WTC11 (cell line): ENCODE measurements at regions of chr1 and their contacts with region 1.

Region 1: GRCh38 chr1:32753532-32754312 is 51.2 kb upstream of the SYNC start:
- DNase-seq: peak; percentile 89
- ATAC-seq: peak; percentile 83
- H3K4me3 Mint-ChIP-seq: peak overlapping the region; percentile 92
- H3K27ac Mint-ChIP-seq: peak overlapping the region; percentile 92
- H3K4me1 Mint-ChIP-seq: peaks cover 45% of the 10 kb centered on the region
- H3K27me3 Mint-ChIP-seq: no peaks in the 10 kb centered on the region
- CTCF ChIP-seq: no peak

Region 2: DNA sequence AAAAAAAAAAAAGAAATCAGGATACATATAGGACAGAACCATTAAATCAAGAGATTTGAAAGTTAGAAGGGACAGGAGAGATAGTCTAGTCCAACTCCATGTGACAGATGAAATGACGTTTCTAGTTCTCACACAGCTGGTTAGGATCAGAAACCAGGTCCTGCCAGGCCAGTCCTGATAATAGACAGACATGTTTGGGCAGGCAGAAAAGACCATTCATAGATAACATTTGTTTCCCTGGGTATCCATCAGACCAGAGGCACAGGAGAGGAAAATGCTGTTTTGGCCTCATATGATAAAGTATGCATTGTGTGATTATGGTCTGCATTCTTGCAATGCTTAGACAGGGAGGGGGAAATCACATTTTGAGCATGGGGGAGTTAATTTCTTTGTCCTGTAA is 259.5 kb before region 1 on chr1:
- CTCF ChIA-PET with region 1: no interaction called
- POLR2A ChIA-PET with region 1: no interaction called
- DNase-seq: no peak
- ATAC-seq: no peak
- H3K4me3 Mint-ChIP-seq: no peak overlapping the region
- H3K27ac Mint-ChIP-seq: peak overlapping the region; percentile 89
- H3K4me1 Mint-ChIP-seq: 0 out of 2 replicates have a peak, but pooled peaks cover 4% of the 10 kb centered on the region
- H3K27me3 Mint-ChIP-seq: no peaks in the 10 kb centered on the region
- CTCF ChIP-seq: no peak

Region 3: DNA sequence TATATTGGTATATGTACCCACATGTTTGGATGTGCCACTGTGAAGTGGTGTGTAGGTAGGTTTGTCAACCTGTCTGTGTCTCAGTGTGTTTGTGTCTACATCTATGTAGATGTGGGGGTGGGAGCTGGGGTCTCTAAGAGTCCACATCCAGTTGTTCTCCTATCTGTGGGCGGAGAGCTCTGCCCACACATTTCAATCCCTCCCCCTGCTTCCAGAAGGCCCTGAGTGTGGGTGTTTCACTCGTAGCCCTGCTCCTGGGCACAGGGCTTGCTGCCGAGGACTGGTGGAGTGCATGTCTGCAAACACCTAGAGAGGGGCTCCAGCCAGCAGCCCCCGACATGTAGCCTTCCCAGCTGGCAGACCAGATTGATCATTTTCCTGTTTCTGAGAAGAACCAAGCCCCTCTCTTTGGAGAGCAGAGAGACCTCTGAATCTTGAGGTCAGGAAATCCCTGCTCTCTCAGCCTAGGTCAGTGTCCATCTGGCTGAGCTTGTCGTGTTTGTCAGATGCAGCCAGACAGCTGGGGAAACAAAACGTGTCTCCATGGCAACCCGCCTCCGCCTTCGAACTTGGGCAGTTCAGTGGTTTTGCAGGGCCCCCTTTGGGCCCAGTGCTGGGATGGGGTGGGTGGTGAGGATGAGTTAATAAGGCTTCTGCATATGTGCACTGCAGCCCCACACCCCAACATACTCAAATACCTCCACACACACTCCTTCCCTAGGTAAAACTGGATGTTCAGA is 20.0 kb before region 1 on chr1:
- CTCF ChIA-PET with region 1: interaction called, 12 read pairs
- POLR2A ChIA-PET with region 1: interaction called, 4 read pairs
- DNase-seq: peak; percentile 49
- ATAC-seq: no peak
- H3K4me3 Mint-ChIP-seq: no peak overlapping the region
- H3K27ac Mint-ChIP-seq: no peak overlapping the region
- H3K4me1 Mint-ChIP-seq: peaks cover 18% of the 10 kb centered on the region
- H3K27me3 Mint-ChIP-seq: peaks cover 25% of the 10 kb centered on the region
- CTCF ChIP-seq: no peak

Region 4: DNA sequence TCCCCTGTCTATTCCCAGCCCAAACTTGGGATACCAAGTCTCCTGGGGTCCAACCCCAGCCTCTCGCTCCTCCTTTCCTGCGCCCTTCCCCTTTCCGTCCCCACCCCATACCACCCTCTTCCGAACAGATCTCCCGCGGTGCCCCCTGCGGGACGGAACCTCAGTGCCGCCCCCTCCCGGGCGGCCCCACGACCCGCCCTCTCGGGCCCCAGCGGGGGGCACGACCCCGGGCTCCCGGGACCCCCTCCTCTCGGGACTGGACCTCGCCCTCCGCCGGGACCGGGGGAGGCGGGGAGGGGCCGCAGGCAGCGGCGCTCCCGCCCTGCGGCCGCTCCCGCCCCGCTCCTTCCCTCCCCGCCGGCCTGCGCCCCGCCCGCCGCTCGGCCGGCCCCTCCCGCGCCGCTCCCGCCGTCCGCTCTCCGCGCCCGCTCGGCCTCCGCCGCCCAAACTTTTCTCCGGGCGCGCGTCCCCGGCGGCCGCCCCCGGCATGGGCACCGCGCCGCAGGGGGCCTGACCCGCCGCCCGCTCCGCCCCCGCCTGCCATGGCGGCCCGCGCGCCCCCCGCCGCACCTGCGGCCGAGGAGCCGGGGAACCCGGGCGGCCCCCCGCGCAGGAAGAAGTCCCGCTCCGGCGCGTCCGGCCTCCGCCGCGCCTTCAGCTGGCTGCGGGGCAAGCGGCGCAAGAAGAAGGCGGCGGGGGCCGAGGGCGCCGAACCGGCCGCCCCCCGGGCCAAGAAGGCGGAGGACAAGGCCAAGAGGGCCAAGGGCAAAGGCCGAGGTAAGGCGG is 12.1 kb before region 1 on chr1:
- CTCF ChIA-PET with region 1: interaction called, 11 read pairs
- POLR2A ChIA-PET with region 1: interaction called, 10 read pairs
- DNase-seq: no peak
- ATAC-seq: peak; percentile 1; the same call in 1 of the 2 replicates
- H3K4me3 Mint-ChIP-seq: peak overlapping the region; percentile 84
- H3K27ac Mint-ChIP-seq: no peak overlapping the region
- H3K4me1 Mint-ChIP-seq: peaks cover 41% of the 10 kb centered on the region
- H3K27me3 Mint-ChIP-seq: peaks cover 16% of the 10 kb centered on the region
- CTCF ChIP-seq: no peak

Region 5: GRCh38 chr1:33342041-33342723 is 588.5 kb after region 1 on chr1:
- CTCF ChIA-PET with region 1: no interaction called
- POLR2A ChIA-PET with region 1: no interaction called
- DNase-seq: peak; percentile 46
- ATAC-seq: peak; percentile 68
- H3K4me3 Mint-ChIP-seq: peak overlapping the region; percentile 39
- H3K27ac Mint-ChIP-seq: 0 out of 2 replicates have a peak overlapping the region, but pooled peaks have one; percentile 18
- H3K4me1 Mint-ChIP-seq: peaks cover 63% of the 10 kb centered on the region
- H3K27me3 Mint-ChIP-seq: peaks cover 81% of the 10 kb centered on the region
- CTCF ChIP-seq: no peak